Mammary epithelial cell (primary cell): ENCODE measurements at regions of chr7 and their contacts with region 1.

Region 1: GRCh38 chr7:129433847-129434674 is at the start of gene STRIP2:
- DNase-seq: peak; percentile 80
- H3K4me3 ChIP-seq: peak within 1 kb of the TSS; percentile 60 to 89 (median 85)
- H3K27ac ChIP-seq: peak within 1 kb of the TSS; percentile 67
- H3K4me1 ChIP-seq: peaks cover 29% of the 10 kb centered on the region
- H3K27me3 ChIP-seq: no peaks in the 10 kb centered on the region
- CTCF ChIP-seq: peak in 1 of 2 donors; percentile 35
- total RNA-seq, gene STRIP2: 5.2 to 12.5 TPM

Region 2: DNA sequence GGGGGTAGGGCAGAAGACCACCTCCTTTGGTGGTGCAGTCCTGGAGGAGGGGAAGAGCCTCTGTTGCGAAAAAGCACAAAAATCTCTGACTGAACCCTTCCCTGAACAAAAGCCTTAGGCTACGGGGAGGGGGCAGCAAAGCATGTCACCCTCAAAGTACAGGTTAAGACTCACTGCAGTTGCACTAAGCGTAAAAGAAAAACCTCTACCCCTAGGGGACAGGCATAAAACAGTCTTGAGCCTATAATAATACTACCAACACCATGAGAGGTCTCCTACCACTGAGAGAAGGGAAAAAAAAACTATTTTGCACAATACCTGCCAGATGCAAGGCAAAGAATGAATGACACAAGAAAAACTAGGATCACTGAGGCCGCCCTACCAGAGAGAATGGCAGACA is 396.5 kb before region 1 on chr7:
- CTCF ChIA-PET with region 1: no interaction called
- dilution Hi-C with region 1: no loop called
- in situ Hi-C with region 1: no loop called
- intact Hi-C with region 1: no loop called
- DNase-seq: no peak
- H3K4me3 ChIP-seq: no peak overlapping the region
- H3K27ac ChIP-seq: no peak overlapping the region
- H3K4me1 ChIP-seq: no peaks in the 10 kb centered on the region
- H3K27me3 ChIP-seq: no peaks in the 10 kb centered on the region
- CTCF ChIP-seq: no peak

Region 3: DNA sequence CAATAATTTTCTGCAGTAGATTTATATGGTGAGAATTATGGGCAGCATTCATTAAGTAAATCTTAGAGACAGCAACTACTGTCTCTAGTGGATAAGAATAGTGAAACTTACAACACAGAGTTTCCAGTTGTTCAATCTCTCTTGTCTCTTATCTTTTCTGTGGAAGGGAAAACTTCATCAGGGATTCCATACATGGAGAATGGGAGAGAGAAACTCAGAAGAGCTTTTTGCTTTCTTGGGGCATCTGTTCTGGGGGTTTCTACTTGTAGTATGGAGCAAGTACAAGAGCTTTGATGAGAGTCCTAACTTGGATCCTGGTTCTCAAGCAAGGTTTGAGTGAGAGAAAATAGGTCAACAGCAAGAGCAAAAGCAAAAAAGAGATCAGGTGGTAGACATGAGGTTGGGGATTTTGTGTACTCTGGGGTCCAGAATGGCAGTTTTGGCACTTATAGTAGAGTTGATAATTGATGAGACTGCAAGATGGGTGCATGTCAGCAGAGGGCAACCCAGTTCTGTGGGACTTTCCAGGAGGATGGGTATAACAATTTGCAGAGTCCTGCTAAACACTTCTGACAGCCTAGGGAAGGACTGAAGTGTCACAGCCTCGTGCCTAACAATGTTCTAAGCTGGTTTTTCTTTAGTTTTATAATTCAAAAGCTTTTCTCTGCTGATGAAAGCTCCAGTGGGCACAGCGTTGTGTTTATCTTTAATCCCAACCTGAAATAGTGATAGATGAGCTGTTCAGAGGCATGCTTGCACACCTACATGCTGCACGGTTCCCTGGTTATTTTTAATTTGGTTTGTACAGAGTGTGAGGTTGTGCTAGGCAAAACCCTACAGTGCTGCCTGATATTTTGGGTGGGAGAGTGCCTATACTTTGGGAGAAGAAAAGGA is 31.8 kb before region 1 on chr7:
- CTCF ChIA-PET with region 1: interaction called, 13 read pairs
- dilution Hi-C with region 1: no loop called
- in situ Hi-C with region 1: no loop called
- intact Hi-C with region 1: no loop called
- DNase-seq: no peak
- H3K4me3 ChIP-seq: no peak overlapping the region
- H3K27ac ChIP-seq: no peak overlapping the region
- H3K4me1 ChIP-seq: no peaks in the 10 kb centered on the region
- H3K27me3 ChIP-seq: no peaks in the 10 kb centered on the region
- CTCF ChIP-seq: peak in 1 of 2 donors; percentile 25